Activated T-helper 1 cell treated with anti-CD3 and anti-CD28 coated beads, Interleukin-12 subunit alpha, Interleukin-12 subunit beta, Interleukin-2, Interleukin-4 antibody, amounts not matched to agents 30 ng/mL and 10 ng/mL and 1 ng/mL, durations not matched to agents 14 hours and 24 hours and 36 hours (primary cell): ENCODE measurements at regions of chr5 and their contacts with region 1.

Region 1: DNA sequence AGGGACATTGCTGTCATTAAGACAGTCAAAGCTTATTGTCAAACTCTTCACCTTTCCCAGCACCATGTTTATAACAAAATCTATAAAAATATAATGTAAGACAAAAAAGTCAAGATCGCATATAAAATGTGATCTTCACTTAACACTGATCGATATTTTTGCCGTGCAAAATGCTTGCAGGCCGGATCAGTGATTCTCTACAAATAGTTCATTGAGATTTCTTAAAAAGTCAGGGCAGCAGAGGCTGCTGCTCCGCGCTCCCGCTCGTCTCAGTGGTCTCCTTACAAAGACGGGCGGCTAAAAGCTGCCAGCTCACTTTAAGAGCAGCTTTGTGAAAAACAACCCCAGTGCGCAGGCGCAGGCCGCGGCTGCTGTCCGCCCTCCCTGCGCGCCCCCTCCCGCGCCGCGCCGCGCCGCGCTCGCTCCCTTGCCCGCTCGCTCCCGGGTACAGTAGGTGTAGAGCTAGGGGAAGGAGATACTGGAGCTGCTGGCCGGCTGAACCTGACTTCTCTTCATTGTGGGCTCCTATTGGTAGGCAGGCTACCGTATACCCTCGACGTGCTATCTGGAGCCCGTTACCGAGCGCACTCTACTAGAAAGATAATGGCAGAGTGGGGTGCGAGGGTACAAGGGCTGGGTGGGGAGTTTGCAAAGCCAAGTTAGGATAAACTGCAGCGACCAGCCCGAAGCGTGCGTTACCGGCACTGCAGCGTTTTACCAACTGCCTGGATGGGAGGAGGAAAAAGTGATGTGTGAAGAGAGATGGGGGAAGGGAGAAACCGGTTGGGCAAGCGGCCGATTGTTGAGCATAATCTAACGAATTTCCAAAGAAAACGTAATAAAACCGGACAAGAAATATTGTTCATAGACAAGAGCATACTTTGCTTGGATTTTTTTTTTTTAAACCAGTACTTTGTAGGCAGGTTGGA is at the start of gene ARRDC3:
- DNase-seq: peak; percentile 96
- H3K4me3 Mint-ChIP-seq: peak within 1 kb of the TSS; percentile 98
- H3K27ac Mint-ChIP-seq: peak within 1 kb of the TSS; percentile 100
- H3K4me1 Mint-ChIP-seq: peaks cover 35% of the 10 kb centered on the region
- H3K27me3 Mint-ChIP-seq: peaks cover 3% of the 10 kb centered on the region
- total RNA-seq, gene ARRDC3: 10.5 and 11.5 TPM in 2 replicates

Region 2: GRCh38 chr5:90529194-90529938 is 853.9 kb before region 1 on chr5 and contains the start of gene LYSMD3:
- intact Hi-C with region 1: loop called (anchors 2 kb)
- DNase-seq: peak; percentile 94
- H3K4me3 Mint-ChIP-seq: peak within 1 kb of the TSS; percentile 99
- H3K27ac Mint-ChIP-seq: peak within 1 kb of the TSS; percentile 98
- H3K4me1 Mint-ChIP-seq: peaks cover 42% of the 10 kb centered on the region
- H3K27me3 Mint-ChIP-seq: peaks cover 19% of the 10 kb centered on the region
- total RNA-seq, gene LYSMD3: 12.3 and 13.6 TPM in 2 replicates

Region 3: GRCh38 chr5:90940227-90940995 is 442.9 kb before region 1 on chr5:
- intact Hi-C with region 1: loop called (anchors 1 kb)
- DNase-seq: peak; percentile 42
- H3K4me3 Mint-ChIP-seq: no peak overlapping the region
- H3K27ac Mint-ChIP-seq: peak overlapping the region; percentile 62
- H3K4me1 Mint-ChIP-seq: peaks cover 15% of the 10 kb centered on the region
- H3K27me3 Mint-ChIP-seq: no peaks in the 10 kb centered on the region

Region 4: DNA sequence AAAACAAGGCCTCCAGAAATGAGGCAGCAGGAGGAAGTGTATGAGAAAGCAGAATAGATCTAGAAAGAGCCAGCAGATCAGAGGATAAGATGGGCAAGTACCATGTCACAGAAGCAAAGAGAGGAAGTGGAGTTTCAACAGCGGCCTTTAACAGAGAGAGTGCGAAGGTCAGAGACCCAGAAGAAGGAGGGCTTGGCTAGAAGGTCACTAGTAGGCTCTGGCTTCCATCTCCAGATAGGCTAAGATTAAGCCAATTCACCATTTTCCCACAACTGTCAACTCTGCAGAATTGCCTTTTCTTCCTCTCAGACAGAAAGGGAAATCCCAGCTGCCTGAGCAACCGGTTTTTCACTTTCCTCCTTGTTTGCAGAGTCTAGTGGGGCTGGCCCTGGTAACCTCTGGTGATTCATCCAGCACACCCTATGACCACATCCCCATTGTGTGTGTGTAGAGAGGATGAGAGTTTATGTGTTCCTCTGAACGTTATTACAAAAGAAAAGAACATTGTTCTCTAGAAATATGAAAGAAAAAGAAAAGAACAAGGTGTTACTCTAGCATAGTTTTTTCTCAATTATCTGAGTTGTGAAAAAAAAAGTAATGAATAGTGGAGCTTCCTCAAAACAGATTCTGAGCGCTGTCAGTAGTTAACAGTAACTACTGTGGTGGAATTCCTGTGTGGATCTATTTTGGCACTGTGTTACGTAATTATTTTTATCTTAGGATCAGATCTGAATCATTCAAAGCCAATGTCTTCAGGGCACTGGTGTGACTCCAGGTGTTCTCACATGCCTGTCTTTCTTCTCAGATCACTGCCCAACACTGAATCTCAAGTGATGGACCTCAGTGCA is 220.5 kb before region 1 on chr5:
- intact Hi-C with region 1: loop called (anchors 1 kb)
- DNase-seq: peak; percentile 70
- H3K4me3 Mint-ChIP-seq: peak overlapping the region; percentile 2
- H3K27ac Mint-ChIP-seq: peak overlapping the region; percentile 54
- H3K4me1 Mint-ChIP-seq: peaks cover 22% of the 10 kb centered on the region
- H3K27me3 Mint-ChIP-seq: peaks cover 14% of the 10 kb centered on the region

Region 5: GRCh38 chr5:91269198-91269597 is 114.1 kb before region 1 on chr5:
- intact Hi-C with region 1: loop called (anchors 1 kb)
- DNase-seq: peak; percentile 41
- H3K4me3 Mint-ChIP-seq: no peak overlapping the region
- H3K27ac Mint-ChIP-seq: peak overlapping the region; percentile 49
- H3K4me1 Mint-ChIP-seq: peaks cover 40% of the 10 kb centered on the region
- H3K27me3 Mint-ChIP-seq: peaks cover 17% of the 10 kb centered on the region

Region 6: GRCh38 chr5:91332267-91333045 is 50.8 kb before region 1 on chr5:
- intact Hi-C with region 1: loop called (anchors 2 kb)
- DNase-seq: no peak
- H3K4me3 Mint-ChIP-seq: no peak overlapping the region
- H3K27ac Mint-ChIP-seq: peak overlapping the region; percentile 37
- H3K4me1 Mint-ChIP-seq: peaks cover 33% of the 10 kb centered on the region
- H3K27me3 Mint-ChIP-seq: peaks cover 11% of the 10 kb centered on the region

Region 7: DNA sequence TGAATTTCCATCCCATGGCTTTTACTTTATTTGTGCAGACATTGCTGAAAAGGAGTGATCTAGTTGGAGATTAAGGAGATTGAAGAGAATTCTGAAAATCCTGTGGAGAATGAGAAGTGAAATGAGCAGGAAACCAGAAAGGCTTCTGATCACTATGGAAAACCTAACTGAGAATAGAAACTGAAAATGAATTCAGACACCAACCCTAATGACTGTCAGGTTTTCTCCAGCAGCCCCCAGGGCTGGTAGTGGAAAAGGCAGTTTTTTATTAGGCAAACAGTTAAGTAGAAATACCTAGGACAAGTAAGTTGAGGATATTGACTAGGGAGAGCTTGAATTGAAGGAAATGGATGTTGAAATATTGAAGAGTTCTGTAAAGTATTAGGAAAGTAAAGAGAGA is 14.5 kb after region 1 on chr5:
- intact Hi-C with region 1: no loop called
- DNase-seq: no peak
- H3K4me3 Mint-ChIP-seq: no peak overlapping the region
- H3K27ac Mint-ChIP-seq: no peak overlapping the region
- H3K4me1 Mint-ChIP-seq: peaks cover 13% of the 10 kb centered on the region
- H3K27me3 Mint-ChIP-seq: no peaks in the 10 kb centered on the region